ENCODE measurements at regions of chr5 and their contacts with region 1.

Region 1: GRCh38 chr5:163005949-163006348 is 431.4 kb upstream of the CCNG1 start:
- DNase-seq: no peak
- ATAC-seq: no peak
- H3K4me3 ChIP-seq: no peak overlapping the region
- H3K4me3 Mint-ChIP-seq: no peak overlapping the region
- H3K27ac ChIP-seq: no peak overlapping the region
- H3K27ac Mint-ChIP-seq: no peak overlapping the region
- H3K4me1 ChIP-seq: no peaks in the 10 kb centered on the region
- H3K4me1 Mint-ChIP-seq: no peaks in the 10 kb centered on the region
- H3K27me3 ChIP-seq: no peaks in the 10 kb centered on the region
- H3K27me3 Mint-ChIP-seq: no peaks in the 10 kb centered on the region
- CTCF ChIP-seq: no peak

Region 2: GRCh38 chr5:162801235-162801634 is 204.7 kb before region 1 on chr5:
- CTCF ChIA-PET with region 1: no interaction called
- POLR2A ChIA-PET with region 1: no interaction called
- intact Hi-C with region 1: no loop called
- DNase-seq: no peak
- ATAC-seq: no peak
- H3K4me3 ChIP-seq: no peak overlapping the region
- H3K4me3 Mint-ChIP-seq: no peak overlapping the region
- H3K27ac ChIP-seq: no peak overlapping the region
- H3K27ac Mint-ChIP-seq: no peak overlapping the region
- H3K4me1 ChIP-seq: no peaks in the 10 kb centered on the region
- H3K4me1 Mint-ChIP-seq: no peaks in the 10 kb centered on the region
- H3K27me3 ChIP-seq: no peaks in the 10 kb centered on the region
- H3K27me3 Mint-ChIP-seq: no peaks in the 10 kb centered on the region
- CTCF ChIP-seq: no peak

Region 3: GRCh38 chr5:163124207-163124606 is 118.3 kb after region 1 on chr5:
- CTCF ChIA-PET with region 1: no interaction called
- POLR2A ChIA-PET with region 1: no interaction called
- intact Hi-C with region 1: no loop called
- DNase-seq: no peak
- ATAC-seq: no peak
- H3K4me3 ChIP-seq: no peak overlapping the region
- H3K4me3 Mint-ChIP-seq: no peak overlapping the region
- H3K27ac ChIP-seq: no peak overlapping the region
- H3K27ac Mint-ChIP-seq: no peak overlapping the region
- H3K4me1 ChIP-seq: no peaks in the 10 kb centered on the region
- H3K4me1 Mint-ChIP-seq: no peaks in the 10 kb centered on the region
- H3K27me3 ChIP-seq: no peaks in the 10 kb centered on the region
- H3K27me3 Mint-ChIP-seq: no peaks in the 10 kb centered on the region
- CTCF ChIP-seq: no peak

Region 4: GRCh38 chr5:163473635-163474243 is 467.8 kb after region 1 on chr5:
- CTCF ChIA-PET with region 1: no interaction called
- POLR2A ChIA-PET with region 1: no interaction called
- intact Hi-C with region 1: no loop called
- DNase-seq: peak in 3 of 14 experiments; percentile 44 to 55 (median 55)
- ATAC-seq: peak; percentile 55
- H3K4me3 ChIP-seq: no peak overlapping the region
- H3K4me3 Mint-ChIP-seq: no peak overlapping the region
- H3K27ac ChIP-seq: no peak overlapping the region
- H3K27ac Mint-ChIP-seq: no peak overlapping the region
- H3K4me1 ChIP-seq: no peaks in the 10 kb centered on the region
- H3K4me1 Mint-ChIP-seq: no peaks in the 10 kb centered on the region
- H3K27me3 ChIP-seq: no peaks in the 10 kb centered on the region
- H3K27me3 Mint-ChIP-seq: no peaks in the 10 kb centered on the region
- CTCF ChIP-seq: peak; percentile 58

Region 5: DNA sequence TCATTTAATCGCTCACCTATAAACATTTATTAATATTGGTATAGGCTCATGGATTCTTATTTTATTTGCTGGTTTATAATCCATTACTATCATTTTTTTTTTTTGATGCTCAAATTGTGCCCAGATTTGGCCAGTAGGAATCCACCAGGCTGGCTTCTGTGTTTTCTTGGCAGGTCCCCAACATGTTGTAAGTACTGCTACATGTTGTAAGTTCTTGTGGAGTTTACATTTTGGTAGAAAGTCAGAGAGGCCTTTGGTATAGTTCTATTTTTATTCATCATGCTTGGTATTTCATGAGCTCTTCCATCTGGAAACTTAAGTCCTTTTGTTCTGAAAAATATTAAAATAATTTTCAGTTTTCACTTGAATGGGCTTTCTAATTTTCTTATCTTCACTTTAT is 546.6 kb after region 1 on chr5:
- CTCF ChIA-PET with region 1: no interaction called
- POLR2A ChIA-PET with region 1: no interaction called
- intact Hi-C with region 1: loop called in 1 of 2 experiments (anchors 5 kb)
- DNase-seq: no peak
- ATAC-seq: no peak
- H3K4me3 ChIP-seq: no peak overlapping the region
- H3K4me3 Mint-ChIP-seq: no peak overlapping the region
- H3K27ac ChIP-seq: no peak overlapping the region
- H3K27ac Mint-ChIP-seq: no peak overlapping the region
- H3K4me1 ChIP-seq: no peaks in the 10 kb centered on the region
- H3K4me1 Mint-ChIP-seq: no peaks in the 10 kb centered on the region
- H3K27me3 ChIP-seq: peaks cover 0 to 4% of the 10 kb centered on the region in 2 experiments
- H3K27me3 Mint-ChIP-seq: peaks cover 24% of the 10 kb centered on the region
- CTCF ChIP-seq: no peak

Measured in CD4-positive, alpha-beta T cell (primary cell).